IMR-90 (cell line): ENCODE measurements at regions of chr19 and their contacts with region 1.

Region 1: GRCh38 chr19:14147797-14148605 is 11.6 kb upstream of the ASF1B start:
- DNase-seq: peak; percentile 57
- ATAC-seq: peak; percentile 96
- H3K4me3 ChIP-seq: no peak overlapping the region
- H3K27ac ChIP-seq: no peak overlapping the region
- H3K4me1 ChIP-seq: peaks cover 5% of the 10 kb centered on the region; the same call in 1 of the 2 replicates
- H3K27me3 ChIP-seq: no peaks in the 10 kb centered on the region
- CTCF ChIP-seq: peak; percentile 81
- POLR2A ChIP-seq: no peak
- RAD21 ChIP-seq: peak; percentile 79

Region 2: GRCh38 chr19:14347999-14348889 is 200.2 kb after region 1 on chr19:
- CTCF ChIA-PET with region 1: interaction called, 7 read pairs
- POLR2A ChIA-PET with region 1: no interaction called
- dilution Hi-C with region 1: no loop called
- in situ Hi-C with region 1: no loop called
- intact Hi-C with region 1: loop called (anchors 1 kb)
- DNase-seq: no peak
- ATAC-seq: peak; percentile 98
- H3K4me3 ChIP-seq: no peak overlapping the region
- H3K27ac ChIP-seq: no peak overlapping the region
- H3K4me1 ChIP-seq: no peaks in the 10 kb centered on the region
- H3K27me3 ChIP-seq: peaks cover 41% of the 10 kb centered on the region
- CTCF ChIP-seq: peak; percentile 94
- POLR2A ChIP-seq: no peak
- RAD21 ChIP-seq: peak; percentile 96

Region 3: DNA sequence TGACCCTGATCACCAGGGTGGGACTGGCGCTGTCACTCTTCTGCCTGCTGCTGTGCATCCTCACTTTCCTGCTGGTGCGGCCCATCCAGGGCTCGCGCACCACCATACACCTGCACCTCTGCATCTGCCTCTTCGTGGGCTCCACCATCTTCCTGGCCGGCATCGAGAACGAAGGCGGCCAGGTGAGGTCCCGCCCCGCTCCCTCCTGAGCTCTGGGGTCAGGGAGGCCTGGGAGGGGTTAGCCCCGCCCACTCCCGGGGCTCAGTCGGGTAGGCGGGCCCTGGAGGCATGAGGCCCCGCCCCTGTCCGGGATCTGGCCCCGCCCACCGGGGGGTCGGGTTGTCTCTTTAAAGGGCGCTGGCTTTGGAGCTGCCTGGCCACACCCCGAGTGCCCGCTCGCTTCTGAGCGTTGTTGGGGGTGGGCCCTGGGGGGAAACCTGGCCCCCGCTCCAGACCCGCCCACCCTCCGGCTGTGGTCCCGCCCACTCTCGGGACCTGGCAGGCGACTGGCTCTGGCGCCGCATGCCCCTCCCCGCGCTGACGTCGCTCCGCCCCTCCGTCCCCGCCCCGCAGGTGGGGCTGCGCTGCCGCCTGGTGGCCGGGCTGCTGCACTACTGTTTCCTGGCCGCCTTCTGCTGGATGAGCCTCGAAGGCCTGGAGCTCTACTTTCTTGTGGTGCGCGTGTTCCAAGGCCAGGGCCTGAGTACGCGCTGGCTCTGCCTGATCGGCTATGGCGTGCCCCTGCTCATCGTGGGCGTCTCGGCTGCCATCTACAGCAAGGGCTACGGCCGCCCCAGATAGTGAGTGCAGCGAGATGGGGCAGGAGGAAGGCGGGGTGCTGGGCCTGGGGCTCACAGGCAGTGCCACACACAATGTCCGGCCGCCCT is 258.0 kb after region 1 on chr19:
- CTCF ChIA-PET with region 1: interaction called, 3 read pairs
- POLR2A ChIA-PET with region 1: no interaction called
- dilution Hi-C with region 1: no loop called
- in situ Hi-C with region 1: no loop called
- intact Hi-C with region 1: loop called (anchors 2 kb)
- DNase-seq: peak; percentile 73
- ATAC-seq: peak; percentile 95
- H3K4me3 ChIP-seq: peak overlapping the region; percentile 7; the same call in 1 of the 2 replicates
- H3K27ac ChIP-seq: no peak overlapping the region
- H3K4me1 ChIP-seq: no peaks in the 10 kb centered on the region
- H3K27me3 ChIP-seq: no peaks in the 10 kb centered on the region
- CTCF ChIP-seq: peak; percentile 83
- POLR2A ChIP-seq: no peak
- RAD21 ChIP-seq: peak; percentile 79